ENCODE measurements at regions of chr3 and their contacts with region 1.

Region 1: GRCh38 chr3:66407611-66408218 is 93.1 kb downstream of the LRIG1 start:
- DNase-seq: peak; percentile 67 to 75 (median 70)
- H3K4me3 ChIP-seq: no peak overlapping the region
- H3K4me3 Mint-ChIP-seq: no peak overlapping the region
- H3K27ac ChIP-seq: no peak overlapping the region
- H3K27ac Mint-ChIP-seq: peak overlapping the region in 6 of 7 donors; percentile 37 to 76 (median 48)
- H3K4me1 ChIP-seq: no peaks in the 10 kb centered on the region
- H3K4me1 Mint-ChIP-seq: peaks cover 0 to 4% (median 2%) of the 10 kb centered on the region in 4 donors
- H3K27me3 ChIP-seq: no peaks in the 10 kb centered on the region
- H3K27me3 Mint-ChIP-seq: no peaks in the 10 kb centered on the region

Region 2: GRCh38 chr3:66336333-66336766 is 71.4 kb before region 1 on chr3:
- CTCF ChIA-PET with region 1: no interaction called
- POLR2A ChIA-PET with region 1: no interaction called
- intact Hi-C with region 1: no loop called
- DNase-seq: no peak
- H3K4me3 ChIP-seq: no peak overlapping the region
- H3K4me3 Mint-ChIP-seq: no peak overlapping the region
- H3K27ac ChIP-seq: no peak overlapping the region
- H3K27ac Mint-ChIP-seq: peak overlapping the region in 3 of 7 donors; percentile 16 to 25 (median 22)
- H3K4me1 ChIP-seq: no peaks in the 10 kb centered on the region
- H3K4me1 Mint-ChIP-seq: peaks cover 11 to 20% (median 16%) of the 10 kb centered on the region in 4 donors
- H3K27me3 ChIP-seq: no peaks in the 10 kb centered on the region
- H3K27me3 Mint-ChIP-seq: no peaks in the 10 kb centered on the region

Region 3: DNA sequence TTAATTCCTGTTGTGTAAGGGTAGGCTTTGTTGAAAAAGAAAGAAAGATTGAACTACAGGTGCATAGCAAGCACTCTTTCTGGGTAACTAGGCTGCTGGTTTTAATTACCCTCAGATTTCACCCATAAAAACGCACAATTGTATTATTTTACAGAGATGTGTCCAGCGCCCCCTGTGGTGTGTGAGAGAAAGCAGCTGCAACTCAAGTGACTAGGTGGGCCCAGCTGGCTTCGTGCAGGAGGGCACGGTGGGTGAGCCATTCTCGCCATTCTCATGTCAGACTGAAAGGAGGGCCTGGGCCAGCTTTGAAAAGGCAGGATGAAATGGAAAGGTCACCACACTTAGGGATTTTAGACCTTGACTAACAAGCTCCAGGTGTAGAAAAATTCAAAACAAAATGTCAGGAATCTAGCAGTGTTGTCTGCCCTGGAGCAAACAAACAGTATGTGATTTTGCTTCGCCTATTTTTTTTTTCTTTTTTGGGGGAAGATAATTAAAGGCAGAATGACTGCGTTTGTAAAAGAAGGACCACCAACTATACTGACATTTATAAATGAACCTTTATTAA is 29.4 kb before region 1 on chr3:
- CTCF ChIA-PET with region 1: interaction called, 19 read pairs
- POLR2A ChIA-PET with region 1: no interaction called
- intact Hi-C with region 1: no loop called
- DNase-seq: peak; percentile 49 to 70 (median 56)
- H3K4me3 ChIP-seq: no peak overlapping the region
- H3K4me3 Mint-ChIP-seq: peak overlapping the region in 2 of 8 donors; percentile 12 to 32
- H3K27ac ChIP-seq: peak overlapping the region; percentile 45
- H3K27ac Mint-ChIP-seq: peak overlapping the region; percentile 82 to 95 (median 89)
- H3K4me1 ChIP-seq: peaks cover 25% of the 10 kb centered on the region
- H3K4me1 Mint-ChIP-seq: peaks cover 19 to 37% (median 22%) of the 10 kb centered on the region in 4 donors
- H3K27me3 ChIP-seq: no peaks in the 10 kb centered on the region
- H3K27me3 Mint-ChIP-seq: no peaks in the 10 kb centered on the region

Region 4: GRCh38 chr3:66428733-66429132 is 21.0 kb after region 1 on chr3:
- CTCF ChIA-PET with region 1: interaction called, 16 read pairs
- POLR2A ChIA-PET with region 1: no interaction called
- intact Hi-C with region 1: no loop called
- DNase-seq: no peak
- H3K4me3 ChIP-seq: no peak overlapping the region
- H3K4me3 Mint-ChIP-seq: no peak overlapping the region
- H3K27ac ChIP-seq: no peak overlapping the region
- H3K27ac Mint-ChIP-seq: no peak overlapping the region
- H3K4me1 ChIP-seq: peaks cover 11% of the 10 kb centered on the region
- H3K4me1 Mint-ChIP-seq: peaks cover 48 to 87% (median 69%) of the 10 kb centered on the region in 4 donors
- H3K27me3 ChIP-seq: no peaks in the 10 kb centered on the region
- H3K27me3 Mint-ChIP-seq: no peaks in the 10 kb centered on the region

Region 5: DNA sequence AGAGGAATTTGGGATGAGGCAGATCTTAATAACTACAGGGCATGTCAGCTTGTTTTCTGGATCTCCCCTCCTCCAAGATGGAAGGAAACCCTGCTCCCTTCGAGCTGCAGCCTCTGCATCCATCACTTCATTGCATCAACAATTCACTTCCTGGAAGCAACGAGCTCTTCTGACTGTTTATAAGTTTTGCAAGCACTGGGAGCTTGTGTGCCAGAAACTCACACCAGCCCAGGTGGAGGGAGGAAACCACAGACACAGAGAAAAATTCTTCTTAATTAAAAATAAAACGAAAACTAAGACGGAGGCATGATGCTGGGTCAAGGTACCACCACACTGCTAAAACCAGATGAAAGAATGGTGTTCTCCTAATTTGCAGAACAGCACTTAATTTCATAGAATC is 82.5 kb after region 1 on chr3:
- CTCF ChIA-PET with region 1: interaction called, 45 read pairs
- POLR2A ChIA-PET with region 1: no interaction called
- intact Hi-C with region 1: no loop called
- DNase-seq: peak in 1 of 5 donors; percentile 37
- H3K4me3 ChIP-seq: peak overlapping the region; percentile 18 to 30
- H3K4me3 Mint-ChIP-seq: peak overlapping the region; percentile 74 to 93 (median 82)
- H3K27ac ChIP-seq: peak overlapping the region; percentile 31
- H3K27ac Mint-ChIP-seq: peak overlapping the region; percentile 30 to 91 (median 61)
- H3K4me1 ChIP-seq: peaks cover 100% of the 10 kb centered on the region
- H3K4me1 Mint-ChIP-seq: peaks cover 71 to 98% (median 86%) of the 10 kb centered on the region in 4 donors
- H3K27me3 ChIP-seq: no peaks in the 10 kb centered on the region
- H3K27me3 Mint-ChIP-seq: no peaks in the 10 kb centered on the region

Region 6: DNA sequence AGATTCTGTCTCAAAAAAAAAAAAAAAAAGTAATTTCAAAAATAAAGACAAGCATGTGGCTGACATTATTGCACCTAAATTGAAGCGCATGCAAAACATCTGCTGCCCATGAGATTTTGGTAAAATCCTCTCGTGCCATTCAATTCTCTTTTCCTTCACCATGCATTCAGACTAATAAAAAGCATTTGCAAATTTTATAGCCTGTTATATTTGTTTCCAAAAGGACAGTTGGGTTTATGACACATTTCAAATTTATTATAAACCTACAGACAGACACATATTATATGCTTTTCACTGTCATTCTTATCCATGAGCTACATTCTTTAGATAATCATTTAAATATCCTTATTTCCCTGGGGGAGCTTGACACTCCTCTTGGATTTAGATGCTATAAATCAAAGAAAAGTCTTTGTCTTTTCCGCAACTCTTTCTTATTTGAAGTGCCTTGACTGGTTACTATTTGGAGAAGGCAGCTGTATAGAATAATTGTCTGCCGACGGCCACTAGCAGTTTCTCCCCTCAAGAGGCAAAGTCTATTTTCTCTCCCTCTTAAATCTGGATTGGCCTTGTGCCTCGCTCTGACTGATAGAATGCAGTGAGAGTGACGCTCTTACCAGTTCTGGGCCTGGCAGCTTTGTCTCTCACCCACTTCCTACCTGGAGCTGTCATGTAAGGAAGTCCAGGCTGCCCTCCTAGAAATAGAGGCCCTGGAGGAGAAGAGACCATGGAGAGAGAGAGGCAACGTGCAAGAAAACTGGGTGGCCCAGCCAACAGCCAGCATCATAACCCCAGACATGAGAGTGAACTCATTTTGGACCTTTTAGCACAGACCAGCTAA is 99.9 kb after region 1 on chr3:
- CTCF ChIA-PET with region 1: interaction called, 12 read pairs
- POLR2A ChIA-PET with region 1: no interaction called
- intact Hi-C with region 1: no loop called
- DNase-seq: no peak
- H3K4me3 ChIP-seq: no peak overlapping the region
- H3K4me3 Mint-ChIP-seq: no peak overlapping the region
- H3K27ac ChIP-seq: no peak overlapping the region
- H3K27ac Mint-ChIP-seq: no peak overlapping the region
- H3K4me1 ChIP-seq: peaks cover 12% of the 10 kb centered on the region
- H3K4me1 Mint-ChIP-seq: peaks cover 12 to 16% (median 15%) of the 10 kb centered on the region in 4 donors
- H3K27me3 ChIP-seq: no peaks in the 10 kb centered on the region
- H3K27me3 Mint-ChIP-seq: peaks cover 0 to 1% of the 10 kb centered on the region in 2 donors

Region 7: DNA sequence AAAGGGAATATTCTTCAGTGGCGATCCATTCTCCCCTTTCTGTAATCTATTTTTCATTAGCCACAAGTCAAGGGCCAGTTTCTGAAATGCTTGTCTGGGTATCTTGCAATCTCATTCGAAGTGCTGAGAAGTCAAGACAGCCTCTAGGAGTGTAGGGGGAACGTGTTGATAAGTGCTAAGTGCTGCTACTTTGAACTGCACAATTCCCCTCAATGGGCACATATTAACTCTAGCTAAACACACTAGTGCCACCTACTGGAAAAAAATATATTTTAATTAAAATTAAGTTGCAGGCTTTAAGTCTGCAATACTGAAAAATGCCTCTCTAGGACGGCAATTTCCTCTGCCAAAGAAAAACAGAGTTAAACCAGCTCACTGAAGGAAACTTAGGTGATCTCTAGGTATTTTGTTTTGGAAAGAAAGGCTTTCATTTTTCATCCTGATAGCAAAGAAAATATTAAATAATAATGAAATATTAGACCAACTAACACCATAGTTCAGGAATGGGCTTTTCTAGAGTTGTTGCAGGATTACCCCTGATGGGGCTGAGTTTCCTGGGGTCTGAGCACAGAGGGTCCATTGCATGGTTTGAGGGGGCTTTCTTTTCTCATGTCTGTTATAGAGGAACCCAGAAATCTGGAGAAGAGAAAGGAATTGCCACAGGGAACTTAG is 408.5 kb after region 1 on chr3:
- CTCF ChIA-PET with region 1: interaction called, 187 read pairs
- POLR2A ChIA-PET with region 1: no interaction called
- intact Hi-C with region 1: loop called (anchors 1 kb)
- DNase-seq: peak in 4 of 5 donors; percentile 60 to 69 (median 64)
- H3K4me3 ChIP-seq: no peak overlapping the region
- H3K4me3 Mint-ChIP-seq: no peak overlapping the region
- H3K27ac ChIP-seq: no peak overlapping the region
- H3K27ac Mint-ChIP-seq: no peak overlapping the region
- H3K4me1 ChIP-seq: no peaks in the 10 kb centered on the region
- H3K4me1 Mint-ChIP-seq: peaks cover 0 to 2% (median under 1%) of the 10 kb centered on the region in 4 donors
- H3K27me3 ChIP-seq: no peaks in the 10 kb centered on the region
- H3K27me3 Mint-ChIP-seq: peaks cover 0 to 9% of the 10 kb centered on the region in 2 donors

Measured in CD4-positive, alpha-beta memory T cell (primary cell).